Caco-2 (cell line): ENCODE measurements at regions of chr15 and their contacts with region 1.

Region 1: GRCh38 chr15:75809986-75810750 is 33.1 kb upstream of the UBE2Q2 start:
- DNase-seq: peak; percentile 57 to 66
- H3K4me3 ChIP-seq: no peak overlapping the region
- H3K4me3 Mint-ChIP-seq: no peak overlapping the region
- H3K27ac Mint-ChIP-seq: no peak overlapping the region
- H3K4me1 ChIP-seq: no peaks in the 10 kb centered on the region; the same call in 1 of the 2 replicates
- H3K4me1 Mint-ChIP-seq: peaks cover 8% of the 10 kb centered on the region
- H3K27me3 ChIP-seq: no peaks in the 10 kb centered on the region
- H3K27me3 Mint-ChIP-seq: peaks cover 3% of the 10 kb centered on the region
- CTCF ChIP-seq: peak; percentile 58 to 72

Region 2: GRCh38 chr15:75842722-75843551 is 32.8 kb after region 1 on chr15 and contains the start of gene UBE2Q2:
- CTCF ChIA-PET with region 1: interaction called, 3 read pairs
- POLR2A ChIA-PET with region 1: interaction called, 5 read pairs
- intact Hi-C with region 1: loop called (anchors 1 kb)
- DNase-seq: peak; percentile 81 to 88
- H3K4me3 ChIP-seq: peak within 1 kb of the TSS; percentile 97
- H3K4me3 Mint-ChIP-seq: peak within 1 kb of the TSS; percentile 92
- H3K27ac Mint-ChIP-seq: peak within 1 kb of the TSS; percentile 92
- H3K4me1 ChIP-seq: peaks cover 12% of the 10 kb centered on the region; the same call in 1 of the 2 replicates
- H3K4me1 Mint-ChIP-seq: peaks cover 29% of the 10 kb centered on the region
- H3K27me3 ChIP-seq: no peaks in the 10 kb centered on the region
- H3K27me3 Mint-ChIP-seq: no peaks in the 10 kb centered on the region
- CTCF ChIP-seq: no peak
- total RNA-seq, gene UBE2Q2: 40.5 and 41.9 TPM in 2 replicates

Region 3: DNA sequence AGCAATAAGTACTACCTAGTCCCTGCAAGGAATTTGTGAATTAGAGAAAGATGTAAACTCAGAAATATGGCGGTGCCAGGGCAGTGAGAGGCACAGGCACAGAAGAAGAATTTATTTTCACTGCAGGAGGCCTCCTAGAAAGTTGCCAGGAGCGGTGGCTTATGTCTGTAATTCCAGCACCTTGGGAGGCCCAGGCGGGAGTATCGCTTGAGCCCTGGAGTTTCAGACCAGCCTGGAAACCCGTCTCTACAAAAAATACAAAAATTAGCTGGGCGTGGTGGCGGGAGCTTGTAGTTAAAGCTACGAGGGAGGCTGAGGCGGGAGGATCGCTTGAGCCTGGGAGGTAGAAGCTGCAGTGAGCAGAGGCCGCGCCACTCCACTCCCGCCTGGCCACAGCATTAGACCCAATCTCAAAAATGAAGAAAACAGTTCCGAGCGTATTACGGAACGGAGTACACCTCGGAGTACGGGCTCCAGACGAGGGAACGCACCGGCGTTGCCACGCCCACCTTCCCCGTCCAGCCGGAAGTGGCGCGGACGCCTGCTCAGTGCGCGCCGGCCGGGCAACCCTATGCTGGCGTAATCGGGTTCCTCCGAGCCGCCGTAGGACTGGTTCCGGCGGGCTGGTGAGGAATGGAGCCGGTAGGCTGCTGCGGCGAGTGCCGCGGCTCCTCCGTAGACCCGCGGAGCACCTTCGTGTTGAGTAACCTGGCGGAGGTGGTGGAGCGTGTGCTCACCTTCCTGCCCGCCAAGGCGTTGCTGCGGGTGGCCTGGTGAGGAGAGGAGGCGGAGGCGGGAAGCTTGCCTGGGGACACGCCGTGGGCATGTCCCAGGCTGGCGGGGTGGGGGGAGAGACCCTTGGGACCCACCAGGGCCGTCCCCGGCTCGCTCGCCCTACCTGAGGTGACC is 93.4 kb after region 1 on chr15 and contains the start of gene FBXO22:
- CTCF ChIA-PET with region 1: interaction called, 3 read pairs
- POLR2A ChIA-PET with region 1: no interaction called
- intact Hi-C with region 1: loop called (anchors 5 kb)
- DNase-seq: peak; percentile 89 to 94
- H3K4me3 ChIP-seq: peak within 1 kb of the TSS; percentile 83
- H3K4me3 Mint-ChIP-seq: peak within 1 kb of the TSS; percentile 99
- H3K27ac Mint-ChIP-seq: peak within 1 kb of the TSS; percentile 98
- H3K4me1 ChIP-seq: peaks cover 17% of the 10 kb centered on the region
- H3K4me1 Mint-ChIP-seq: peaks cover 10% of the 10 kb centered on the region
- H3K27me3 ChIP-seq: no peaks in the 10 kb centered on the region
- H3K27me3 Mint-ChIP-seq: no peaks in the 10 kb centered on the region
- CTCF ChIP-seq: no peak
- total RNA-seq, gene FBXO22: 43.9 and 47.7 TPM in 2 replicates

Region 4: GRCh38 chr15:75928680-75929608 is 118.8 kb after region 1 on chr15:
- CTCF ChIA-PET with region 1: interaction called, 19 read pairs
- POLR2A ChIA-PET with region 1: no interaction called
- intact Hi-C with region 1: loop called (anchors 2 kb)
- DNase-seq: peak in 1 of 2 experiments; percentile 42
- H3K4me3 ChIP-seq: no peak overlapping the region
- H3K4me3 Mint-ChIP-seq: no peak overlapping the region
- H3K27ac Mint-ChIP-seq: no peak overlapping the region
- H3K4me1 ChIP-seq: peaks cover 14% of the 10 kb centered on the region; the same call in 1 of the 2 replicates
- H3K4me1 Mint-ChIP-seq: peaks cover 18% of the 10 kb centered on the region
- H3K27me3 ChIP-seq: no peaks in the 10 kb centered on the region
- H3K27me3 Mint-ChIP-seq: no peaks in the 10 kb centered on the region
- CTCF ChIP-seq: peak; percentile 44 to 64

Region 5: GRCh38 chr15:76139368-76140073 is 329.4 kb after region 1 on chr15:
- CTCF ChIA-PET with region 1: interaction called, 16 read pairs
- POLR2A ChIA-PET with region 1: no interaction called
- intact Hi-C with region 1: loop called (anchors 1 kb)
- DNase-seq: peak; percentile 71 to 78
- H3K4me3 ChIP-seq: no peak overlapping the region
- H3K4me3 Mint-ChIP-seq: no peak overlapping the region
- H3K27ac Mint-ChIP-seq: no peak overlapping the region
- H3K4me1 ChIP-seq: no peaks in the 10 kb centered on the region
- H3K4me1 Mint-ChIP-seq: peaks cover 4% of the 10 kb centered on the region
- H3K27me3 ChIP-seq: peaks cover 1% of the 10 kb centered on the region; the same call in 1 of the 2 replicates
- H3K27me3 Mint-ChIP-seq: peaks cover 10% of the 10 kb centered on the region
- CTCF ChIP-seq: peak; percentile 78 to 90